ENCODE measurements at regions of chr12 and their contacts with region 1.

Region 1: DNA sequence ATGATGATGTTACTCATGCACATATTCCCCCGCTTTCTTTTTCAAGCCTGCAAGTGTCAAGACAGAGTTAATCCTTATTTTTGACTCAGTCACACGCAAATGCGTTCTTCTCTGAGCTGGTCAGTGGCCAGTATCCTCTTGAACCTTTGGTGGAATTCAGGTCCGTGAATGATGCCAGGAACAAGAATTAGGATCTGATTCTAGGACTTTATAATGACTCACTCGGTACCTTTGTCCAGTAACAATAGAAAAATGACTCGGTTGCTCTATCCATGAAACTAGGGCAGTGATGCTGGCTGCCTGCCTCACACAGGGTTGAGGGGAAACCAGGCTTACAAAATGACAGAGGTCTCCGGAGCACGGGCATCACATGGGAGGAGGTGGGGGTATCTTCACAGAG is 185.8 kb upstream of the NUDT4 start:
- DNase-seq: no peak
- H3K4me3 ChIP-seq: peak overlapping the region in 1 of 4 donors; percentile 8
- H3K27ac ChIP-seq: peak overlapping the region; percentile 67 to 78 (median 75)
- H3K4me1 ChIP-seq: peaks cover 0 to 22% (median 17%) of the 10 kb centered on the region in 4 donors
- H3K27me3 ChIP-seq: no peaks in the 10 kb centered on the region
- CTCF ChIP-seq: no peak
- EP300 ChIP-seq: peak; percentile 81
- POLR2A ChIP-seq: no peak

Region 2: GRCh38 chr12:93243689-93244513 is 51.9 kb after region 1 on chr12:
- intact Hi-C with region 1: no loop called
- DNase-seq: no peak
- H3K4me3 ChIP-seq: no peak overlapping the region
- H3K27ac ChIP-seq: peak overlapping the region in 2 of 4 donors; percentile 14 to 33
- H3K4me1 ChIP-seq: peaks cover 11 to 23% (median 16%) of the 10 kb centered on the region in 4 donors
- H3K27me3 ChIP-seq: no peaks in the 10 kb centered on the region
- CTCF ChIP-seq: no peak
- EP300 ChIP-seq: no peak
- POLR2A ChIP-seq: no peak

Region 3: DNA sequence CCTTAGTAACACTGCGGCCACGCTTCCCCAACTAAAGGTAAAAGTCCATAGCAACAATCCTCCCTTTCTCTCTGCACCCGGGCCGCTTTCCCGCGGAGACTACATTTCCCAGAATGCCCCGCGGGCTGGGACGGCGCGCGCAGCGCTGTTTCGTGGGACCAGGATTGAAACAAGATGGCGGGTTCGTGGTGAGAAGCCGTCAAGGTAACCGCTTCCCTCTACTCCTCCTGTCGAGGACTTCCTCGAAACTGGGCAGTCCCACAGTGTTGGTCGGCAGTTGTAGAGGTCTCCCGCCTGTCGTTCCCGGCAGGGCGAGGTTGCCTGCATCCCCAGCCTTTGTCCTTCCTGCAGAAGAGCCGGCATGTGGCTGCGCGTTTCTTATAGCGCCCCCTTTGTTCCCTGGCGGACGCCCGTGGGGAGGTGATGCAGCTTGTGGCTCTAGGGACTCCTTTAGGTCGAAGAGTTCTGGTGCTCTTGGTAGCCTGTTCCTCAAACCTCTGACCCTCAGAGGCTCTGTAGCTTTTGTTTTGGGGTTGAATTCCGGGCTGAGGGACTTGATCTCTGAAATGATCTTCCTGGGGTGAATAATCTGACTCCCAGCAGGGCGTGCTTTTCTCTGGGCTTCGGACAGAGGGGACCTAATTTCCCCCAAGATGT is 275.5 kb after region 1 on chr12 and contains the start of gene MRPL42:
- intact Hi-C with region 1: loop called (anchors 5 kb)
- DNase-seq: peak; percentile 97
- H3K4me3 ChIP-seq: peak within 1 kb of the TSS; percentile 56 to 92 (median 82)
- H3K27ac ChIP-seq: peak within 1 kb of the TSS; percentile 86 to 93 (median 88)
- H3K4me1 ChIP-seq: peaks cover 12 to 33% (median 23%) of the 10 kb centered on the region in 4 donors
- H3K27me3 ChIP-seq: no peaks in the 10 kb centered on the region
- CTCF ChIP-seq: peak; percentile 70 to 75 (median 70)
- EP300 ChIP-seq: no peak
- POLR2A ChIP-seq: peak; percentile 41
- total RNA-seq, gene MRPL42: 21.6 to 44.2 (median 34.8) TPM

Region 4: GRCh38 chr12:93569656-93570551 is 377.9 kb after region 1 on chr12:
- intact Hi-C with region 1: no loop called
- DNase-seq: peak; percentile 97
- H3K4me3 ChIP-seq: peak overlapping the region; percentile 71 to 90 (median 78)
- H3K27ac ChIP-seq: peak overlapping the region; percentile 91 to 95 (median 92)
- H3K4me1 ChIP-seq: peaks cover 3 to 44% (median 23%) of the 10 kb centered on the region in 4 donors
- H3K27me3 ChIP-seq: peaks cover 0 to 16% (median 0%) of the 10 kb centered on the region in 4 donors
- CTCF ChIP-seq: peak; percentile 87 to 89 (median 88)
- EP300 ChIP-seq: no peak
- POLR2A ChIP-seq: no peak